WTC11 (cell line): ENCODE measurements at regions of chr17 and their contacts with region 1.

Region 1: GRCh38 chr17:7136266-7136877 is 21.8 kb upstream of the ASGR2 start:
- DNase-seq: peak; percentile 80
- ATAC-seq: no peak
- H3K4me3 Mint-ChIP-seq: peak overlapping the region; percentile 50
- H3K27ac Mint-ChIP-seq: no peak overlapping the region
- H3K4me1 Mint-ChIP-seq: peaks cover 62% of the 10 kb centered on the region
- H3K27me3 Mint-ChIP-seq: peaks cover 48% of the 10 kb centered on the region
- CTCF ChIP-seq: peak; percentile 83

Region 2: DNA sequence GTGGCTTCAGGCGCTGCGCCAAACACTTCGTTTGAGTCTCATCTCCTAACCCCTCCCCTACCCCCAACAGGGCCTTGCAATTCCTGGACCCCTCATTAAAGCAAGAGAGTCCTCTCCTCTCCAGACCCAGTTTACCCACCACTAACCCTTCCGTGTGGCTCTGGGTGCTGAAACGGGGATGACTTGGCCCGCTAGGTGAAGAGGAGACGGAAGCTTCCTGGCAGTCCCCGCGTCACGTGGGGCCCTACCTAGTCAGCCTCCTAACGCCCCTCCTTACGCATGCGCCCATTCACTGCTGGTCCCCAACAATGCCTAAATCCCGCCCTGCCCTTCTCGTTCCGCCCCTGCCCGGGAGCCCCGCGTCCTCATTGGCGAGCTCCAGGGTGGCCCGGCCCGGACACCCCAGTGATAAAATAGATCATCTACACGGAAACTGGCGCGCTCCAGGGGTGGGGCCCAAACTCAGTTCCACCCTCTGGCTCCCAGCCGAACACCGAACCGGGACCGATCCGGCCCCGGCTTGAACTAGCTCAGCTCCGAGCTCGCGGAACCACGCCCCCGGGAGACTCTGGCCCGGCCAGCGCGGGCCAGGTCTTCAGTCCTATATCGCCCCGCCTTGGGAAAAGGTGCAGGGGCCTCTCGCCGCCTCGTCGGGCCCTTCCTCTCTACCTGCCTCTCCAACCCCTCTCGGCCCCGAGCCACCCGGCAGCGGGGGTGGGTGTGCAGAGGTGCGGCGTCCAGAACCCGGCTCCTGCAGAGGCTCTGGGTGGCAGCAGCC is 100.6 kb before region 1 on chr17 and contains the start of gene SLC16A13:
- CTCF ChIA-PET with region 1: interaction called, 17 read pairs
- POLR2A ChIA-PET with region 1: interaction called, 3 read pairs
- DNase-seq: peak; percentile 94
- ATAC-seq: peak; percentile 92
- H3K4me3 Mint-ChIP-seq: peak within 1 kb of the TSS; percentile 94
- H3K27ac Mint-ChIP-seq: peak within 1 kb of the TSS; percentile 87; the same call in 1 of the 2 replicates
- H3K4me1 Mint-ChIP-seq: peaks cover 20% of the 10 kb centered on the region
- H3K27me3 Mint-ChIP-seq: peaks cover 20% of the 10 kb centered on the region
- CTCF ChIP-seq: no peak
- total RNA-seq, gene SLC16A13: 5.2 to 7.1 TPM (median 6.9 TPM) in 3 replicates

Region 3: GRCh38 chr17:7107012-7107754 is 29.2 kb before region 1 on chr17:
- CTCF ChIA-PET with region 1: interaction called, 19 read pairs
- POLR2A ChIA-PET with region 1: no interaction called
- DNase-seq: no peak
- ATAC-seq: no peak
- H3K4me3 Mint-ChIP-seq: no peak overlapping the region
- H3K27ac Mint-ChIP-seq: peak overlapping the region; percentile 2; the same call in 1 of the 2 replicates
- H3K4me1 Mint-ChIP-seq: peaks cover 16% of the 10 kb centered on the region
- H3K27me3 Mint-ChIP-seq: peaks cover 9% of the 10 kb centered on the region
- CTCF ChIP-seq: no peak

Region 4: DNA sequence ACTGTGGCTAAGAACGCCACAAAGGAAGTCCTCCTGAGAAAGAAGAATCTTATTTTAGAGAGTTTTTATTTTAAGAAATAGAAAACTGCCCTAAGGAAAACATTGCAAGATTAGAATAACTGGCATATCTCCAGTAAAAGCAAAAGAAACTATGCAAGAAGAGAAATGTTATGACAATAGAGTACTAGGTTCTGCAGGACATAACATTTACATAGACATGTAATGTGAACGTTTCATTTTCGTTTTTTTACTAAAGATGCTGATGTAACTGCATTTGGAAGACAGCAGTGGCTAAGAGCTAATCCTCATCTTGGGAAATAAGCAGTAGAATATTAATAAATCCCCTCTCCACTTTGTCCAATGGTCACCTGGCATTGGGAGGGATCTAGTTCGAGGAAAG is 14.0 kb before region 1 on chr17:
- CTCF ChIA-PET with region 1: interaction called, 12 read pairs
- POLR2A ChIA-PET with region 1: no interaction called
- DNase-seq: no peak
- ATAC-seq: no peak
- H3K4me3 Mint-ChIP-seq: no peak overlapping the region
- H3K27ac Mint-ChIP-seq: no peak overlapping the region
- H3K4me1 Mint-ChIP-seq: 0 out of 2 replicates have a peak, but pooled peaks cover 8% of the 10 kb centered on the region
- H3K27me3 Mint-ChIP-seq: peaks cover 27% of the 10 kb centered on the region
- CTCF ChIP-seq: no peak

Region 5: DNA sequence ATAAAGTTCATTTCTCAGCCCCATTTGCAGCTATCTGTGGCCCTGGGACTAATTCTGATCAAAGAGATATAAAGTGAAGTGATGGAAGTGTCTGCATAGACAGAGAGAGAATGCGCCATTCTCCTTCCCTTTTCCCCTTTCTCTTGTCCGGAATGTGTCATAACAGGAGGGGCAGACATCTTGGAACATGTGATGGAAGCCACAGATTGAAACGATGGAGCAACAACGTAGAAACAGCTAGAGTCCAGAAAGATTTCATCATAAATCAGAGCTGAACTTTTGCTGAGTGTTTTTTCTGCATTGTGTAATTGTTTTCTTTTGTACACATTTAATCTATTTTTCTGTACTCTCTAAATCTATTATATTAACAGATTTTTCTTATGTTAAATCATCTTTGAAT is 31.5 kb after region 1 on chr17:
- CTCF ChIA-PET with region 1: interaction called, 33 read pairs
- POLR2A ChIA-PET with region 1: interaction called, 4 read pairs
- DNase-seq: no peak
- ATAC-seq: no peak
- H3K4me3 Mint-ChIP-seq: no peak overlapping the region
- H3K27ac Mint-ChIP-seq: no peak overlapping the region
- H3K4me1 Mint-ChIP-seq: peaks cover 4% of the 10 kb centered on the region
- H3K27me3 Mint-ChIP-seq: no peaks in the 10 kb centered on the region; the same call in none of the 2 replicates
- CTCF ChIP-seq: no peak

Region 6: DNA sequence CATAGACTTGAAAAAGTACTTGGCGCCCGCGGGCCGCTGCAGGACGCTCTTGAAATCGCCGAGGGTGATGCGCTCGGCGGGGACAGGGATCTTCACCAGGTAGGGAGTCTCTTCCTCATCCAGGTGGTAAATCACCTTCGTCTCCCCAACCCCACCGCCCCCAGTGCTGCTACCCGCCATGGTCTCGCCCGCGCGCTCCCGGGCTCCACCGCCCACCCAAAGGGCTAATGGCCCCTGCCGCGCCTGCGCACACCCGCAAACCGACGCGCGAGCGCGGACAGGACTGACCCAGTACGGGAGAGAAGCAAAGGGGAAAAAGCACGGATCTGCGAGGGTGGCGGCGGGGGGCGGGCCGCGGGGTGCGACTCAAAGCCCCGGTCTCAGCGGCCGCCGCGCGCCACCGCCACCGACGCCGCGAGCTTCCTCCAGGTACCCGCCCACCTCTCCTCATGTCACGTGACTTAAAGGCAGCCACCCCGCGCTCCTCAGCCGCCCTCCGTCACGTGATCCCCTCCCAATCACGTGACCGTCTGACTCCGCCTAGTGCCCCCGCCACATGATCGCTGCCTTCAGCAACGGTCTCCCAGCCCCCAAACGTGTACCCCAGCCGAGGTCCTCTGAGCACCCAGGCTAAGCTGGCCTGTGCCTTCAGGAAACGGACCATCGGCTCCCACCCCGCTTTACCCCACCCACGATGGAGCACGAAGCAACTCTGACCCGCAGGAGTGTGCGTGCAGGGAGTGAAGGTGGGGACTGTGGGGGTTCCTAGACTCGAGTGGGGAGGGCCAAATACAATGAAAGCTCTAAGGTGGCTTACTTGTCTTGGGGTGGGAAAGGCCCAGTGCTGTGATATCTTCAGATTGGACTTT is 97.9 kb after region 1 on chr17 and contains the start of gene DVL2:
- CTCF ChIA-PET with region 1: no interaction called
- POLR2A ChIA-PET with region 1: no interaction called
- DNase-seq: peak; percentile 95
- ATAC-seq: peak; percentile 31
- H3K4me3 Mint-ChIP-seq: peak within 1 kb of the TSS; percentile 99
- H3K27ac Mint-ChIP-seq: peak within 1 kb of the TSS; percentile 96
- H3K4me1 Mint-ChIP-seq: peaks cover 29% of the 10 kb centered on the region
- H3K27me3 Mint-ChIP-seq: no peaks in the 10 kb centered on the region
- CTCF ChIP-seq: no peak
- total RNA-seq, gene DVL2: 57.6 to 67.3 TPM (median 59.8 TPM) in 3 replicates